ENCODE measurements at regions of chr6 and their contacts with region 1.

Region 1: GRCh38 chr6:135675862-135676261 is 175.6 kb upstream of the PDE7B start:
- DNase-seq: peak in 1 of 2 experiments; percentile 62
- H3K4me3 ChIP-seq: no peak overlapping the region
- H3K4me3 Mint-ChIP-seq: no peak overlapping the region
- H3K27ac Mint-ChIP-seq: no peak overlapping the region
- H3K4me1 ChIP-seq: no peaks in the 10 kb centered on the region
- H3K4me1 Mint-ChIP-seq: no peaks in the 10 kb centered on the region
- H3K27me3 ChIP-seq: no peaks in the 10 kb centered on the region
- H3K27me3 Mint-ChIP-seq: no peaks in the 10 kb centered on the region
- CTCF ChIP-seq: peak; percentile 54 to 65

Region 2: DNA sequence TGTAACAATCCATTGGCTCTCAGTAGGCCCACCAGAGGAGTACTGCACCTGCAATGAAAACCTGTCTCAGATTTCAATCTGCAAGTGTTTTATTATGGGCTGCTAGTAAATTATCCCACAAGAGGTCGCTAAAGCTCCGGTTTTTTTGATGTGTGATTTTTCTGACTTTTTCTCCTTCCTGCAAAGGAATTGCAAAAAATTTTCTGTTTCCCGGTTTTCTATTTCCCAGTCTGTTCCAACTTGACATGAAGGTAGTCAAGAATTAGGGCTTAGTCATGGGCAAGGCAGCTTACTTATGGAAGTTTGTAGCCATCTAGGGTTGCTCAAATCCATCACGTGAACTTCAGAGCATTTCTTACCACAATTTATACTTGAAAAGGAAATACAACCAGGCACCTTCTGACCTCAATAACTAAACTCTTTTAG is 139.9 kb before region 1 on chr6:
- CTCF ChIA-PET with region 1: no interaction called
- POLR2A ChIA-PET with region 1: no interaction called
- intact Hi-C with region 1: loop called (anchors 10 kb)
- DNase-seq: peak in 1 of 2 experiments; percentile 22
- H3K4me3 ChIP-seq: no peak overlapping the region
- H3K4me3 Mint-ChIP-seq: no peak overlapping the region
- H3K27ac Mint-ChIP-seq: no peak overlapping the region
- H3K4me1 ChIP-seq: no peaks in the 10 kb centered on the region
- H3K4me1 Mint-ChIP-seq: no peaks in the 10 kb centered on the region
- H3K27me3 ChIP-seq: no peaks in the 10 kb centered on the region
- H3K27me3 Mint-ChIP-seq: peaks cover 6% of the 10 kb centered on the region
- CTCF ChIP-seq: peak; percentile 57 to 62

Region 3: GRCh38 chr6:135604035-135604860 is 71.6 kb before region 1 on chr6:
- CTCF ChIA-PET with region 1: no interaction called
- POLR2A ChIA-PET with region 1: no interaction called
- intact Hi-C with region 1: no loop called
- DNase-seq: no peak
- H3K4me3 ChIP-seq: no peak overlapping the region
- H3K4me3 Mint-ChIP-seq: no peak overlapping the region
- H3K27ac Mint-ChIP-seq: no peak overlapping the region
- H3K4me1 ChIP-seq: no peaks in the 10 kb centered on the region
- H3K4me1 Mint-ChIP-seq: no peaks in the 10 kb centered on the region
- H3K27me3 ChIP-seq: no peaks in the 10 kb centered on the region
- H3K27me3 Mint-ChIP-seq: no peaks in the 10 kb centered on the region
- CTCF ChIP-seq: no peak

Region 4: GRCh38 chr6:135728589-135728988 is 52.7 kb after region 1 on chr6:
- CTCF ChIA-PET with region 1: no interaction called
- POLR2A ChIA-PET with region 1: no interaction called
- intact Hi-C with region 1: no loop called
- DNase-seq: no peak
- H3K4me3 ChIP-seq: no peak overlapping the region
- H3K4me3 Mint-ChIP-seq: no peak overlapping the region
- H3K27ac Mint-ChIP-seq: no peak overlapping the region
- H3K4me1 ChIP-seq: no peaks in the 10 kb centered on the region
- H3K4me1 Mint-ChIP-seq: no peaks in the 10 kb centered on the region
- H3K27me3 ChIP-seq: no peaks in the 10 kb centered on the region
- H3K27me3 Mint-ChIP-seq: peaks cover 16% of the 10 kb centered on the region
- CTCF ChIP-seq: no peak

Region 5: GRCh38 chr6:135833771-135834170 is 157.9 kb after region 1 on chr6:
- CTCF ChIA-PET with region 1: no interaction called
- POLR2A ChIA-PET with region 1: no interaction called
- intact Hi-C with region 1: loop called (anchors 2 kb)
- DNase-seq: no peak
- H3K4me3 ChIP-seq: no peak overlapping the region
- H3K4me3 Mint-ChIP-seq: no peak overlapping the region
- H3K27ac Mint-ChIP-seq: no peak overlapping the region
- H3K4me1 ChIP-seq: no peaks in the 10 kb centered on the region
- H3K4me1 Mint-ChIP-seq: no peaks in the 10 kb centered on the region
- H3K27me3 ChIP-seq: peaks cover 2% of the 10 kb centered on the region
- H3K27me3 Mint-ChIP-seq: peaks cover 14% of the 10 kb centered on the region
- CTCF ChIP-seq: no peak

Region 6: DNA sequence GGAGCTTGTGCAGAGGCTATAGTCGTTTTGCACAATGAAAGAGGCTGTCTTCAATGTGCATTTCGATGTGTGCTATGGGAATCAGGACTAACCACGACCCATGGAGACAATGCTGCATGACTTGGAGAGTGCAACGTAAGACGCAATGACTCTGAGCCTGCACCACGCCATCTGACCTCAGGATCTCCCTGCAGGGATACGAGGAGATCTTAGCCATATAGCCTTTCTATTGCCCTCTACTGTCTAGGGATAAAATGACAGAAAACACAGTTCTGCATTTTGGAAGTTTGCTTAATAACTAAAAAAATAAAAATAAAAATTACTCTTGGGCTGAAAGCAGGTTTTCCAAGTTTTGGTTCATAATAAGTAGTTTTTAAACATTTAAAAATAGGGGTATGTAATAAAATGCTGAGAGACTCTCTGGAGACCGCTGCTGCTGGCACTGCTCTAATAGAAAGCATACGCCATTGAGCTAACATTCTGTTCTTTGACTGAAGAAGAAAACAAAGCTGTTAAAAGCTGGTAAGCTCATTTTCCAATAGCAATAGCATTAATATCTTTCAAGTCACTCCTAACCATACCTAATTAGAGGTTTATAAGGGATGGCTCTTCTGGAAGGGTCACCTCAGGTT is 262.8 kb after region 1 on chr6:
- CTCF ChIA-PET with region 1: no interaction called
- POLR2A ChIA-PET with region 1: no interaction called
- intact Hi-C with region 1: loop called (anchors 1 kb)
- DNase-seq: peak in 1 of 2 experiments; percentile 21
- H3K4me3 ChIP-seq: no peak overlapping the region
- H3K4me3 Mint-ChIP-seq: no peak overlapping the region
- H3K27ac Mint-ChIP-seq: no peak overlapping the region
- H3K4me1 ChIP-seq: no peaks in the 10 kb centered on the region
- H3K4me1 Mint-ChIP-seq: no peaks in the 10 kb centered on the region
- H3K27me3 ChIP-seq: no peaks in the 10 kb centered on the region
- H3K27me3 Mint-ChIP-seq: peaks cover under 1% of the 10 kb centered on the region
- CTCF ChIP-seq: peak; percentile 29 to 45

Region 7: DNA sequence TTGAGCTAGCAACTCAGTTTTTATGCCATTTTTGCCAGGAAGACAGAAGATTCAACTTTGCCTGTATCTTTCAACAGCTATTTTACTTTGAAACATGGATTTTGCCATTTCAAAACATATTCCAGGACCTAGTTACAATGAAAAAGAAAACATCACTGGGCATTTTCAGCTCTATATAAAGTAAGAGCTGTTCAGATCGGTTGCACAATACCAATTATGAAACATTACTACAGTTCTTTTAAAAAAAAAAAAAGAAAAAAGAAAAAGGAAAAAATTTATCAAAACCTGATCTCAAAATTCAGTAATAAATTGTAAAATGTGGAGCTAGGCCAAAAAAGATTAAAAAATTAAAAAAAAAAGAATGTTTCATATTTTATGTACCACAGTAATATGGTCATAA is 598.2 kb after region 1 on chr6:
- CTCF ChIA-PET with region 1: no interaction called
- POLR2A ChIA-PET with region 1: no interaction called
- intact Hi-C with region 1: no loop called
- DNase-seq: no peak
- H3K4me3 ChIP-seq: no peak overlapping the region
- H3K4me3 Mint-ChIP-seq: no peak overlapping the region
- H3K27ac Mint-ChIP-seq: no peak overlapping the region
- H3K4me1 ChIP-seq: no peaks in the 10 kb centered on the region
- H3K4me1 Mint-ChIP-seq: no peaks in the 10 kb centered on the region
- H3K27me3 ChIP-seq: no peaks in the 10 kb centered on the region
- H3K27me3 Mint-ChIP-seq: no peaks in the 10 kb centered on the region
- CTCF ChIP-seq: no peak

Region 8: GRCh38 chr6:136317021-136317694 is 641.3 kb after region 1 on chr6:
- CTCF ChIA-PET with region 1: no interaction called
- POLR2A ChIA-PET with region 1: no interaction called
- intact Hi-C with region 1: loop called (anchors 1 kb)
- DNase-seq: peak; percentile 52 to 71
- H3K4me3 ChIP-seq: no peak overlapping the region
- H3K4me3 Mint-ChIP-seq: no peak overlapping the region
- H3K27ac Mint-ChIP-seq: no peak overlapping the region
- H3K4me1 ChIP-seq: no peaks in the 10 kb centered on the region
- H3K4me1 Mint-ChIP-seq: no peaks in the 10 kb centered on the region
- H3K27me3 ChIP-seq: no peaks in the 10 kb centered on the region
- H3K27me3 Mint-ChIP-seq: no peaks in the 10 kb centered on the region
- CTCF ChIP-seq: peak; percentile 75 to 79

Measured in Caco-2 (cell line).